BJ (cell line): ENCODE measurements at regions of chr3 and their contacts with region 1.

Region 1: GRCh38 chr3:98329392-98330124 is 24.1 kb upstream of the OR5K4 start:
- DNase-seq: no peak
- H3K4me3 ChIP-seq: no peak overlapping the region
- H3K27me3 ChIP-seq: no peaks in the 10 kb centered on the region
- CTCF ChIP-seq: peak; percentile 86

Region 2: GRCh38 chr3:98039322-98040024 is 290.1 kb before region 1 on chr3:
- CTCF ChIA-PET with region 1: interaction called, 52 read pairs
- POLR2A ChIA-PET with region 1: no interaction called
- DNase-seq: peak; percentile 36
- H3K4me3 ChIP-seq: peak overlapping the region; percentile 29
- H3K27me3 ChIP-seq: 0 out of 2 replicates have a peak, but pooled peaks cover 3% of the 10 kb centered on the region
- CTCF ChIP-seq: peak; percentile 81